ENCODE measurements at regions of chr7 and their contacts with region 1.

Region 1: DNA sequence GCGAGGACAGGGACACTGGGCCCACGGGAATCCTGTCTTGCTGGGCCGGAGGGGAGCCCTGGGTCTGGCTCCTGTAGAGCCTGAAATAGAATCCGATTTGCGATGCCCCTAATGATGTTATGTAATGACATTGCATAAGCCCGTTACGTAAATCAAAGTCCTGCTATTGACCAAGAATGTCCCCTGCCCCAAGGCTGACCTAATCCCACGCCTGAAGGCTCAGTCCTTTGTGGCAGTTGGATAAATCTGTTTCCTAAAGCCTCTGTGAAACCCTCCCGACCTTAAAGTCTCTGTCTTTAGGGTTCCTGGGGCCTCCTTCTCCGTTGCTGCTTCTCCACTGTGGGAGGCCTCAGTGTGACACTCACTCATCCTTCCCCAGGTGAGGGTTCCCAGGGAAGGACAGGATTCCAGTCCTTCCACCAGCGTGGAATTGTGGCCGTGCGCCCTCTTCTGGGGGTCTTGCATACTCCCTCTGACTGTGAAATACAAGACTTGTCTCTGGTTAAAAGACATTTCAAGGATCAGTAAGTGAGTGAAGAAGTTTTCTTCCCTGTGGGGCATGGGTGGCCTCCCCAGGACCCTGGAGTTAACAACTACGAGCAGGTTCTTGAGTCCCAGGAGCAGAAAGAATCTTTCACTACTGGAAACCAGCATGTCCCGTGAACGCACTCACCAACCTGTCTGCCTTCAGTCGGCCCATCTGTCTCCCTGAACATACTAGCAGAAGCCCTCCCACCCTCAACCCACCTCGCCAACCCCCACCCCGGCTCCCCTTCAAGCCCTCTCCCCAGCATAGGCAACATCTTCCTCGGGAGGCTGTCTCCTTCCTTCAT is 19.8 kb downstream of the ZNF467 start:
- DNase-seq: no peak
- H3K4me3 ChIP-seq: no peak overlapping the region
- H3K27ac ChIP-seq: no peak overlapping the region
- H3K4me1 ChIP-seq: no peaks in the 10 kb centered on the region
- H3K27me3 ChIP-seq: no peaks in the 10 kb centered on the region
- CTCF ChIP-seq: peak in 2 of 3 donors; percentile 33 to 40
- POLR2A ChIP-seq: no peak

Region 2: GRCh38 chr7:149742075-149742701 is 11.4 kb before region 1 on chr7:
- intact Hi-C with region 1: loop called (anchors 1 kb)
- DNase-seq: peak in 1 of 2 donors; percentile 37
- H3K4me3 ChIP-seq: peak overlapping the region; percentile 6 to 50 (median 30)
- H3K27ac ChIP-seq: no peak overlapping the region
- H3K4me1 ChIP-seq: peaks cover 5 to 7% of the 10 kb centered on the region in 2 donors
- H3K27me3 ChIP-seq: no peaks in the 10 kb centered on the region
- CTCF ChIP-seq: peak; percentile 80 to 87 (median 86)
- POLR2A ChIP-seq: no peak